ENCODE measurements at regions of chr13 and their contacts with region 1.

Region 1: GRCh38 chr13:23909606-23910005 is 12.3 kb upstream of the C1QTNF9B start:
- DNase-seq: no peak
- H3K4me3 Mint-ChIP-seq: no peak overlapping the region
- H3K27ac Mint-ChIP-seq: no peak overlapping the region
- H3K4me1 Mint-ChIP-seq: peaks cover 6% of the 10 kb centered on the region
- H3K27me3 Mint-ChIP-seq: peaks cover 13% of the 10 kb centered on the region
- CTCF ChIP-seq: no peak

Region 2: DNA sequence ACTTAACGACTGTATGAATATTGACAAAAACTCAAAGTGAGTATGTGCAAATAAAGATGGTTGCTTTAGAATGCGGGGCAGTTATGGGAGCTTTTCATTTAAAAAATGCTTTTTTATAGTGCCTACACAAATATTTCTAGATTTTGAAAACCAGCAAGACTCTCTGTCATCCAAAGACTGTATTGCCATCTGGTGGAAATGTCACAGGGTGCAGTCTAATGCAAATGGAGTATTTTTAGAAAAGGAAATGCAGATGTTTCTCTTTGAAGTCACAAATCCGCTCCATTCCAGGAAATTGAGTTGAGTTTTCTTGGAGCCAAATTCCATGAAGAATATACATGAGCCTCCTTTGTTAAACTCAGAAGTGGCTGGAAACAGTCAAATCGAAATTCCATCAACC is 10.1 kb before region 1 on chr13:
- CTCF ChIA-PET with region 1: interaction called, 11 read pairs
- POLR2A ChIA-PET with region 1: no interaction called
- intact Hi-C with region 1: no loop called
- DNase-seq: peak; percentile 52
- H3K4me3 Mint-ChIP-seq: no peak overlapping the region
- H3K27ac Mint-ChIP-seq: no peak overlapping the region
- H3K4me1 Mint-ChIP-seq: no peaks in the 10 kb centered on the region
- H3K27me3 Mint-ChIP-seq: peaks cover 8% of the 10 kb centered on the region
- CTCF ChIP-seq: peak; percentile 47

Measured in MCF 10A (cell line).